ENCODE measurements at regions of chr21 and their contacts with region 1.

Region 1: DNA sequence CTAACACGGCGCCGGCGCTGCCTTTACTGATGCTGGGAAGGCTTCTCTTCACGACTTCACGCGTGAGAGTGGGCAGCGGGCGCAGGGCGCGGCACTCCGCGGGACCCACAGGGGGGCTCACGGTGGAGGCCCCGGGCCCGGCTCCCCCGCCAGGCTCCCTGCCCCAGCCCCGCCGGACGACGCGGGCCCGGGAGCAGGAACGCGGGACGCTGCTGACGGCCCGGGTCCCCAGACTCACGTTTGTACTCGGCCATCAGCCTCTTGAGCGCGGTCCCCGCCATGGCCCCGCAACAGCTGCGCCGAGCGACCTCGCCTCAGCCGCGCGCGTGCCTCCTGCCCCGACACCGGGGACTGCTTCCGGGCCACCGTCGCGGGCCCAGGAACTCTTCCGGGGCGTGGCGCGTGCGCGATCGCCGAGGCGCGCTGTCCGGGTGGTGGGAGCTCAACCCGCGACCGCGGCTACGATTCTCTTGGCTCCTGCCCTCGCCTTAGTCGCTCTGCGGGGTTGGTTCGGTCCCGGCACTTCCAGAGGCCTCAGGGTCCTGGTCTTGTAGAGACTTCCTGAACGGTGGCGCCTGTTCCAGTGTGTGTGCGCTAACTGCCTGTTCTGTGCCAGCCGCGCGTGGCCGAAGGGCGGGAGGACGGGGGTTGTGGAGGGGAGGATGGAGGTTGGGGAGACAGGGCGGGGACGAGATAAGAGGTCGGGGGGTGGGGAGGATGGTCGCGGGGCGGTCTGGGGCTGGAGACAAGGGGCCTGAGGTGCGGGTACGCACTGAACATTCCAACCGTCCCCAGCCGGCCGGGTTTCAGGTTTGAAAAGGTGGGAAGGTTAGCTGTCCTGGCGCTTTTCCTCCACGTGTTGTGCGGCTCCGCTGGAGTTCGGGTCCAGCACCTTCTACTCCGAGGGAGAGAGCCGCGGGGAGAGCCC is at the start of gene UBE2G2:
- DNase-seq: peak; percentile 39 to 93 (median 84)

Region 2: GRCh38 chr21:44347911-44348753 is 453.6 kb before region 1 on chr21:
- intact Hi-C with region 1: loop called (anchors 10 kb)
- DNase-seq: no peak

Region 3: GRCh38 chr21:44817506-44817880 is 15.8 kb after region 1 on chr21:
- intact Hi-C with region 1: loop called (anchors 2 kb)
- DNase-seq: peak; percentile 71 to 97 (median 94)

Region 4: GRCh38 chr21:44873356-44874239 is 71.9 kb after region 1 on chr21 and contains the start of gene PTTG1IP:
- intact Hi-C with region 1: loop called (anchors 2 kb)
- DNase-seq: peak; percentile 88 to 99 (median 97)

Region 5: DNA sequence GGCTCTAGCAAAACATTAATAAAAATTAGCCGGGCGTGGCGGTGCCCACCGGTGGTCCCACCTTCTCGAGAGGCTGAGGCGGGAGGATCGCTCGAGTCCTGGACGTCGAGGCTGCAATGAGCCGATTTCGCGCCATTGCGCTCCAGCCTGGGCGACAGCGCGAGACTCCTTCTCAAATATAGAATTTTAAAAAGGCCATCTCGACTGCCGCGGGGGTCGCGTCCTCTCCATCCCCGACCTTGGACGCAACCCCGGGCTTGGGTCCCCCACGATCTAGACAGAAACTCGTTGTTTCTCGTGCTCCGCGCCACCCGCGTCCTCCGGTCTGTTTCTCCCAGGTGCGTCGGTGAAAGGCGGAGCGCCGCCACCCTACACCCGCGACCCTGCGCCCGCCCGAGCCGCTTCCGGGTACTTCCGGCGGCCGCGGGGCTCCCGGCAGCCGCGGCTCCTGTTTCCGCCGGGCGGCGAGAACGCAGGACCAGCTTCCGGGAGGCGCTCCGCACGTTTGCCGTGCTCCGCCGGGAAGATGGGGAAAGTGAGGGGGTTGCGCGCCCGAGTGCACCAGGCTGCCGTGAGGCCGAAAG is 137.9 kb after region 1 on chr21 and contains the start of gene SLX9:
- intact Hi-C with region 1: loop called (anchors 10 kb)
- DNase-seq: peak in 41 of 42 donors; percentile 40 to 92 (median 83)

Measured in head of caudate nucleus (tissue), 42 donors.